Heart left ventricle (tissue), 16 donors: ENCODE measurements at regions of chr10 and their contacts with region 1.

Region 1: GRCh38 chr10:113704637-113705343 is 25.1 kb downstream of the CASP7 start:
- DNase-seq: no peak
- ATAC-seq: peak in 1 of 4 donors; percentile 46
- H3K4me3 ChIP-seq: no peak overlapping the region
- H3K27ac ChIP-seq: no peak overlapping the region
- H3K4me1 ChIP-seq: peaks cover 0 to 21% (median 0%) of the 10 kb centered on the region in 12 donors
- H3K27me3 ChIP-seq: no peaks in the 10 kb centered on the region
- CTCF ChIP-seq: peak; percentile 36 to 74 (median 58)
- POLR2A ChIP-seq: no peak

Region 2: GRCh38 chr10:113802997-113803396 is 98.2 kb after region 1 on chr10:
- intact Hi-C with region 1: loop called in 4 of 10 experiments (anchors 5 to 10 kb)
- DNase-seq: no peak
- ATAC-seq: no peak
- H3K4me3 ChIP-seq: no peak overlapping the region
- H3K27ac ChIP-seq: no peak overlapping the region
- H3K4me1 ChIP-seq: peaks cover 0 to 6% (median 0%) of the 10 kb centered on the region in 12 donors
- H3K27me3 ChIP-seq: no peaks in the 10 kb centered on the region
- CTCF ChIP-seq: no peak
- POLR2A ChIP-seq: no peak

Region 3: GRCh38 chr10:113907166-113907565 is 202.4 kb after region 1 on chr10:
- intact Hi-C with region 1: loop called in 1 of 10 experiments (anchors 10 kb)
- DNase-seq: no peak
- ATAC-seq: no peak
- H3K4me3 ChIP-seq: no peak overlapping the region
- H3K27ac ChIP-seq: no peak overlapping the region
- H3K4me1 ChIP-seq: no peaks in the 10 kb centered on the region
- H3K27me3 ChIP-seq: no peaks in the 10 kb centered on the region
- CTCF ChIP-seq: no peak
- POLR2A ChIP-seq: no peak